ENCODE measurements at regions of chr11 and their contacts with region 1.

Region 1: GRCh38 chr11:63838678-63839507 is at the start of gene MARK2:
- DNase-seq: peak; percentile 94 to 98 (median 97)
- H3K4me3 ChIP-seq: peak within 1 kb of the TSS; percentile 60 to 99 (median 99)
- H3K4me3 Mint-ChIP-seq: peak within 1 kb of the TSS; percentile 99 to 100
- H3K27ac ChIP-seq: peak within 1 kb of the TSS; percentile 87 to 97
- H3K27ac Mint-ChIP-seq: peak within 1 kb of the TSS; percentile 92 to 98 (median 97)
- H3K4me1 ChIP-seq: peaks cover 48 to 59% of the 10 kb centered on the region in 2 donors
- H3K4me1 Mint-ChIP-seq: peaks cover 55% of the 10 kb centered on the region
- H3K27me3 ChIP-seq: no peaks in the 10 kb centered on the region
- H3K27me3 Mint-ChIP-seq: peaks cover 0 to 2% (median 0%) of the 10 kb centered on the region in 3 donors
- CTCF ChIP-seq: no peak
- polyA plus RNA-seq, gene MARK2: 32.4 to 55.7 (median 33.3) TPM

Region 2: DNA sequence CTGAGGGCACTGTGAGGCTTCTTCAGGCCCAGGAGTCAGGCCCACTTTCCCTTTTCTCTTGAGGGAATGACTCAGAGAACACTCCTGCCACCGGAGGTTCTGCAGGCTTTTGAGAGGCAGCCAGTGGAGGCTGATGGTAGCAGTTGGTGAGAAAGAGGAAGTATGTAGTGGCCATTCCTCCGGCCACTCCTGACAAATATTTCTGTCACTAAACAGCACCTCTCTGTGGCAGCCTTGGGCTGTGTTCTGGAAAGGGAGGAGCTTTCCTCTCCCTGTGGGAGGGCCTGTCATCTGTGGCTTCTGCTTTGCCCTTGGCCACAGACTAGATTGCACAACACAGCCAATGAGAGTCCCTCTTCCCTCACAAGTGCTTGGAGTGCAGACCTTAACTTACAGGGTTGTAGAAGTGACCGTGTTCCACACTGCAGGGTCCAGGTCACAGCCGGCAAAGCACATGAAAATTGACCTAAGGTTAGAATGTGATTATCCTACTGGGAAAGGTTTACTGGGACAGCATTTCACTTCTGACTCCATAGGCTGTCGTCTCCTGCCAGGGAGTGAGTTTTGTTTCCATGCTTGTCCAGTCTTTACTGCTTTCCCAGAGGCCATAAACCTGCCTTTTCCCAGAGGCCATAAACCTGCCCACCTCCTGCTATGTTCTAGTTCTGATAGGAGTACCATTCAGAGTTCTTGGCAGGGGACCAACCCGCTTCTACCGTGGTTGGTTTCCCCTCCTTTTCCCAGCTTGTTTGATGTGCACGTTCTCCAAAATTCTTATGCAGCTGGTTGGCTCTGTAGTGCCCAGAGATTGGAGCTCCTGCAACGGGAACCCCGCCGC is 33.3 kb after region 1 on chr11:
- intact Hi-C with region 1: loop called (anchors 2 to 5 kb)
- DNase-seq: peak; percentile 96 to 99 (median 98)
- H3K4me3 ChIP-seq: peak overlapping the region in 1 of 3 experiments; percentile 65
- H3K4me3 Mint-ChIP-seq: peak overlapping the region; percentile 28 to 81
- H3K27ac ChIP-seq: peak overlapping the region; percentile 44 to 67
- H3K27ac Mint-ChIP-seq: peak overlapping the region; percentile 74 to 96 (median 92)
- H3K4me1 ChIP-seq: peaks cover 73 to 78% of the 10 kb centered on the region in 2 donors
- H3K4me1 Mint-ChIP-seq: peaks cover 73% of the 10 kb centered on the region
- H3K27me3 ChIP-seq: no peaks in the 10 kb centered on the region
- H3K27me3 Mint-ChIP-seq: no peaks in the 10 kb centered on the region
- CTCF ChIP-seq: peak; percentile 53

Region 3: GRCh38 chr11:63888170-63889086 is 49.5 kb after region 1 on chr11:
- intact Hi-C with region 1: loop called in 1 of 2 experiments (anchors 5 kb)
- DNase-seq: peak; percentile 44 to 73 (median 65)
- H3K4me3 ChIP-seq: peak overlapping the region; percentile 20 to 70 (median 30)
- H3K4me3 Mint-ChIP-seq: peak overlapping the region; percentile 77 to 95
- H3K27ac ChIP-seq: peak overlapping the region; percentile 51 to 81
- H3K27ac Mint-ChIP-seq: peak overlapping the region; percentile 80 to 96 (median 92)
- H3K4me1 ChIP-seq: peaks cover 49 to 57% of the 10 kb centered on the region in 2 donors
- H3K4me1 Mint-ChIP-seq: peaks cover 83% of the 10 kb centered on the region
- H3K27me3 ChIP-seq: no peaks in the 10 kb centered on the region
- H3K27me3 Mint-ChIP-seq: peaks cover 0 to 4% (median 2%) of the 10 kb centered on the region in 3 donors
- CTCF ChIP-seq: no peak

Region 4: DNA sequence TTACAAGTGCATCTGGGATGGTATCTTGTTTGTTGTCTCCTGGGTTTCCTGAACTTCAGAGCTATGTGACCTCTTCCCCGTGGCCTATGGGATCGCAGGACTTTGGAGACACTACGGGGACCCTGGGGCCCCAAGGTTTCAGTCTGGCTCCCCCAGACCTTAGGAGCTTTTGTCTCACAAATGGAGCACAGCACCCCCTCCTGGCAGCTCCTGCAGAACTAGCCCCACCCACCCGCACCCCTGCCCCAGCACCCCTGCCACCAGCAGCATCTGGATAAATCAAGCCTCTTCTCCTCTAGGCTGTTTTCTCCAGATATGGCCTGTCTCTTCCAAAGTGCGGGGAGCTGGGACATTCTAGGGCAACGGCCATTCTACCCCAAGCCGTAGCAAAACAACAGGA is 67.7 kb after region 1 on chr11:
- intact Hi-C with region 1: no loop called
- DNase-seq: no peak
- H3K4me3 ChIP-seq: no peak overlapping the region
- H3K4me3 Mint-ChIP-seq: no peak overlapping the region
- H3K27ac ChIP-seq: no peak overlapping the region
- H3K27ac Mint-ChIP-seq: no peak overlapping the region
- H3K4me1 ChIP-seq: no peaks in the 10 kb centered on the region
- H3K4me1 Mint-ChIP-seq: no peaks in the 10 kb centered on the region
- H3K27me3 ChIP-seq: no peaks in the 10 kb centered on the region
- H3K27me3 Mint-ChIP-seq: peaks cover 0 to 4% (median 0%) of the 10 kb centered on the region in 3 donors
- CTCF ChIP-seq: peak; percentile 22

Region 5: DNA sequence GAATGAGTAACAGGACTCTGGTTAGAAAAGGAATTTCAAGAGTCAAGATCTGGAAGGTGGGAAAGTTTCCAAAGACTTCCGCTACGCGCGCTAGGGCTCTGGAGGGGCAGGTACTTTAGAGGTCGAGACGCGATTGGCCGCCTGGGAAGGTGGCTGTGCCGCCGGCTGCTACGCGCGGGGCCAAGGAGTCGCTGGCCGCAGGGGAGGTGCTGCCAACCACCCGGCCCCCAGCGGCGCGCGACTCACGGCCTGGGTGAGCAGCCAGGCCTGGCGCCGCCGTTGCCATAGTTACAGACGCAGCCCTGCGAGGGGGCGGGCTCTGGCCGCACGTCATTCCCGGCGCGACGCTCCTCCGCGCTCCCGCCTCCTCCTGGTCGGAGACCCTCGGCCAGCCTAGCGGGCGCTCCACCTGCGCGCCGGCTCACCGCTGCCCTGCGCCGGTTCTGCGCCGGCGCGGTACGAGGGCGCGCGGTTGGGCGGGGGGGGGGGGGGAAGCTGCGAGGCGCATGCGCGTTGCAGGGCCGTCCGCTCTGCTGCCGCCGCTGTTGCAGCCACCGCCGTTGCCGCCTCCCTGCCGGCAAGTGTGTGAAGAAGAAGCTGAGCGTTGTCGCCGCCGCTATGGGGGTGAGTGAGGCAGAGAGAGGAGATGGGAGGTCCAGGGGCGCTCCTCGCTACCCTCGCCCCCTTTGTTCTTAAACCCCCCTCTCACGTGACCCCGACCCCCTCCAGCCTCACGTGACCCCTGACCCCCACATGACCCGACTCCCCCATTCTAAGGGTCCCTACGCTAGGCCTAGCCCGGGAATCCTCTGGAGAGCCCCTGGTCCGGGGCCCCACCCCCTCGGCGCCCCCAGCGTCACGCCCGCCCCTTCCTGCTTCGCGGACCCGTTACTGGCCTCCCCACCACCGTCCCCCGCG is 99.8 kb after region 1 on chr11 and contains the start of gene NAA40:
- intact Hi-C with region 1: loop called (anchors 2 to 5 kb)
- DNase-seq: peak; percentile 79 to 87 (median 85)
- H3K4me3 ChIP-seq: peak within 1 kb of the TSS; percentile 54 to 90 (median 71)
- H3K4me3 Mint-ChIP-seq: peak within 1 kb of the TSS; percentile 87 to 95
- H3K27ac ChIP-seq: peak within 1 kb of the TSS in 1 of 2 donors; percentile 67
- H3K27ac Mint-ChIP-seq: peak within 1 kb of the TSS; percentile 42 to 88 (median 69)
- H3K4me1 ChIP-seq: peaks cover 35 to 36% of the 10 kb centered on the region in 2 donors
- H3K4me1 Mint-ChIP-seq: peaks cover 35% of the 10 kb centered on the region
- H3K27me3 ChIP-seq: no peaks in the 10 kb centered on the region
- H3K27me3 Mint-ChIP-seq: peaks cover 6 to 13% (median 12%) of the 10 kb centered on the region in 3 donors
- CTCF ChIP-seq: no peak
- polyA plus RNA-seq, gene NAA40: 1.5 to 14.5 (median 1.6) TPM

Region 6: DNA sequence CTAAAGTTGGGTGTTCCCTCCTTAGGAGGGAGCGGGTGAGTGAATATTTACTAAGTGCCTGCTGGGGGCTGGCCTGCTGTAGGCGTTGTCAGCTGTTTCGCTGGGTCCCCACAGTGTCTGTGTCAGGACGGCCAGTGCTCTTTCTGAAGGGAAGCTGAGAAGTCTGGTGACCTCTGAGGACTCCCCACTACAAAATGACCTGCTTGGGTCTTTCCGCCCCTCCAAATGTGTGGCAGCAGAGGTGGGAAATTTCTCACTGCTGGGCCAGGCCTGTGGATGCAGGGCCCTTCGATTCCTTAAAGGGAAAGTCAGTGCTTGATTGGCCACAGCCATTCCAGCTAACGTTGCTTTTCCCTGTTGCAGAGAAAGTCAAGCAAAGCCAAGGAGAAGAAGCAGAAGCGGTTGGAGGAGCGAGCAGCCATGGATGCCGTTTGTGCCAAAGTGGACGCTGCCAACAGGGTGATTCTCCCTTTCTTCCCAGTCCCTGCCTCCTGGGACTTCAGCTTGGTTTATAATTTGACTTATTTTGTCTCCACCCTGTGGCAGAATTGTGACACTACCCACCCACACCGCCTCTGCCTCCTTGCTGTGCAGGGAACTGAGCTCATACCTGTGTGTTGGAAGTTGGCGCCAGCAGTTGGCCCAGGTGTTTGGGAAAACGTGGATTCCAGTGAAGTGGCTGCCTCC is 106.7 kb after region 1 on chr11:
- intact Hi-C with region 1: loop called (anchors 2 to 5 kb)
- DNase-seq: peak; percentile 32 to 47 (median 42)
- H3K4me3 ChIP-seq: no peak overlapping the region
- H3K4me3 Mint-ChIP-seq: no peak overlapping the region
- H3K27ac ChIP-seq: no peak overlapping the region
- H3K27ac Mint-ChIP-seq: no peak overlapping the region
- H3K4me1 ChIP-seq: peaks cover 11 to 14% of the 10 kb centered on the region in 2 donors
- H3K4me1 Mint-ChIP-seq: peaks cover 17% of the 10 kb centered on the region
- H3K27me3 ChIP-seq: no peaks in the 10 kb centered on the region
- H3K27me3 Mint-ChIP-seq: peaks cover 0 to 3% (median 0%) of the 10 kb centered on the region in 3 donors
- CTCF ChIP-seq: peak; percentile 75

Measured in CD14-positive monocyte (primary cell).